ENCODE measurements at regions of chr22 and their contacts with region 1.

Region 1: DNA sequence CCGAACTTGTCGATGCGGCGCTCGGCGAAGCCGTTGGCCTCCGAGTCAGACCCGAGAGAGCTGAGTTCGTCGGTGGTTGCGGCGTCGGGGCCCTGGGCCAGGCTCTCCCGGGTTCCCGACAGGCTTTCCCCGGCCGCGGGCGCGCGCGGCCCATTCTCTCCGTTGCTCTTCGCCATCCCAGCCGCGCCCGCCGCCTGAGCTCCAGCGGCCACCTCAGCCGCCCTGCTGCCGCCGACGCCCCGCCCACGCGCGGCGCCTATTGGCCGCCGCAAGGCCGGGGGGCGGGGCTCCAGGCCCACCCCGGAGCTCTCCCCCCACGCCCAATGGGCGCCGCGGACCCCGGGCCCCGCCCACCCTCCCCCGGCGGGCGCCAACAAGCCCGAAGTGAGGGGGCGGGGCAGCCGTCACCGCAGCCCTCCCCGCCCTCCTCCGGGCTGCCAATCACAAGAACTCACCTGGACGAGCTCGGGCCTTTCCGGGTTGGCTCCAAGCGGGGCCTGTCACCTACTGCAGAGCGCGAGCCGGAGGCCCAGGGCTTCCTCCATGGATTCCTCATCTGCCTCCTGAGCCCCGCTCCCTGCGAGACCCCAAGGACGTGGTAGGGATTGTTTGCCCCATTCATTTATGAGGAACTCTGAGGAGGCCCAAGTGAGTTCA is at the start of gene TBC1D10A:
- DNase-seq: peak; percentile 97
- ATAC-seq: peak; percentile 87
- H3K4me3 Mint-ChIP-seq: peak within 1 kb of the TSS; percentile 82
- H3K27ac Mint-ChIP-seq: peak within 1 kb of the TSS; percentile 89
- H3K4me1 Mint-ChIP-seq: peaks cover 45% of the 10 kb centered on the region
- H3K27me3 Mint-ChIP-seq: no peaks in the 10 kb centered on the region
- total RNA-seq, gene TBC1D10A: 20.1 to 21.6 TPM

Region 2: GRCh38 chr22:29798801-29799680 is 527.8 kb before region 1 on chr22:
- CTCF ChIA-PET with region 1: no interaction called
- POLR2A ChIA-PET with region 1: no interaction called
- intact Hi-C with region 1: no loop called
- DNase-seq: no peak
- ATAC-seq: no peak
- H3K4me3 Mint-ChIP-seq: no peak overlapping the region
- H3K27ac Mint-ChIP-seq: no peak overlapping the region
- H3K4me1 Mint-ChIP-seq: no peaks in the 10 kb centered on the region
- H3K27me3 Mint-ChIP-seq: no peaks in the 10 kb centered on the region

Region 3: DNA sequence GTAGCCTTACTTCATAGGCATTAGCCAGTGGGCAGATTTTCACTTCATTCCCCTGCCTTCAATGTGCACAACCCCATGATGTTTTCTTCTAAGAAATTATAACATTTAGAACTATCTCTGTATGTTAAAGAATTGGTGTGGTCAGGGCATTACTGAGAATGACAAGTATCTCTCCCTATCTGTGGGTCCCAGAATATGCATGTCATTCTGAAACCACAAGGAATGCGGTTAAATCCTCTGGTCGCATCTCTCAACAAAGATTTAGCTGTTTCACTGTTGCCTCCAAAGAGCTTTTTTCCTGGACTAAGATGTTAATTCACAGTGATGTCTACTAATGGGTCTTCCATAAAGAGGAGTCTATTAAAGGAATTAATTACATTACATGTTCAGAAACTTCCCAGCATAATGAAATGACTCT is 143.0 kb before region 1 on chr22:
- CTCF ChIA-PET with region 1: no interaction called
- POLR2A ChIA-PET with region 1: no interaction called
- intact Hi-C with region 1: no loop called
- DNase-seq: no peak
- ATAC-seq: peak; percentile 57
- H3K4me3 Mint-ChIP-seq: peak overlapping the region; percentile 8
- H3K27ac Mint-ChIP-seq: peak overlapping the region; percentile 84
- H3K4me1 Mint-ChIP-seq: peaks cover 89% of the 10 kb centered on the region
- H3K27me3 Mint-ChIP-seq: no peaks in the 10 kb centered on the region

Region 4: DNA sequence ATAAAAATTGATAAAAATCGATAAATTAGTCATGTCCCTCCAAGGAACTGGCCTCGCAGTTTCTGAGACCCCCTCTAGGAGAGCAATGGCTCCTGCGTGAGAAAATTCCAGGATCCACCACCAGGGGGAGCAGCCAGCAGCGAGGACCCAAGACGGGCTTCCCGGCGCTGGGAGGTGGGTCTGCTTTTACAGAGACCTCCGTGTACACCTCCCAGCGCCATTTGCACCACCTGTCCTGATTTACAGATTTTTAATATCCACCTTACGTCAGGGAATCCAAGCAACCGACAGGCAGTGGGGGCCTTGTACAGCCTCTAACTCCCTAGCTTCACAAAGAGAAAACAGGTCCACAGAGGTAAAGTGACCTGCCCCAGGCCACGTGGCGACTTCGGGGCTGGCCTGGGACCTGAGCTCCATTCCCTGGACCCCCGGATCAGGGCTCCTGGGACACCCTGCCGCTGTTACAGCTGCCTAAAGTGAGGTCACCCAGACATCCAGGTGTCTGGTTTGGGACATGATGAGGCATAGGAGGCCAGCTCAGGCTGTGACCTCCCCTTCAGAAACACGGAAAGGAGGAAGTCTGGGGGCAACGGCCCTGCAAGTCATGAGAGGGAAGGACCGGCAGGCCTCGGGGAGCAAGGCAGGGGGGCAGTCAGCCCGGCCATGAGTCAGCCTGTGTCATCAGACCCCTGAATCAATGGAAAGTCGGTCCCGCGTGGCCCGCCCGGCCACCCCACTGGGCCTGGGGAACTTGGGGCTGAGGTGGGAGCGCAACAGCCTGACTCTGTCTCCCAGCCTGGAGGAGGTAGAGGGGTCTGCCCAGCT is 63.7 kb before region 1 on chr22:
- CTCF ChIA-PET with region 1: interaction called, 3 read pairs
- POLR2A ChIA-PET with region 1: no interaction called
- intact Hi-C with region 1: loop called in 1 of 2 experiments (anchors 1 kb)
- DNase-seq: peak; percentile 88
- ATAC-seq: no peak
- H3K4me3 Mint-ChIP-seq: peak overlapping the region; percentile 62
- H3K27ac Mint-ChIP-seq: peak overlapping the region; percentile 51
- H3K4me1 Mint-ChIP-seq: peaks cover 33% of the 10 kb centered on the region
- H3K27me3 Mint-ChIP-seq: no peaks in the 10 kb centered on the region

Region 5: DNA sequence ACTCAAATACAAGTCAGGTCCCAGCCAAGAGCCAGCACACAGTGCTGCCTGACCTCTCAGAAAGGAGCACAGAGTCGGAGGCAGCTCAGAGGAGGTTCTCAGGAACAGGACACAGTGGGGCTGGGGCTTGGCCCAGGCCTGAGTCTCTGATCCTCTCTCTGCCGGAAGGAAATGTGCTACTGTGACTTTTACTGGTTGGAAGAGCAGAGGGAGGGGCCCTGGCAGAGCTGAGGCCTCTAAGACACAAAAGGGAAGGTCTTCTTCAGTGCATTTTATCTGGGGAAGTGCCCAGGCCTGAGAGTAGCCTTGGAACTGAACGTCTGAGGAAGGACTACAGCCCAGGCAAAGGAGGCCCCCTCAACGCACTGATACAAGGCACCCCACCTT is 21.3 kb before region 1 on chr22:
- CTCF ChIA-PET with region 1: interaction called, 4 read pairs
- POLR2A ChIA-PET with region 1: interaction called, 3 read pairs
- intact Hi-C with region 1: loop called in 1 of 2 experiments (anchors 2 kb)
- DNase-seq: peak; percentile 68
- ATAC-seq: peak; percentile 79
- H3K4me3 Mint-ChIP-seq: peak overlapping the region; percentile 59
- H3K27ac Mint-ChIP-seq: peak overlapping the region; percentile 85
- H3K4me1 Mint-ChIP-seq: peaks cover 97% of the 10 kb centered on the region
- H3K27me3 Mint-ChIP-seq: no peaks in the 10 kb centered on the region

Region 6: GRCh38 chr22:30310881-30311771 is 15.7 kb before region 1 on chr22:
- CTCF ChIA-PET with region 1: interaction called, 16 read pairs
- POLR2A ChIA-PET with region 1: interaction called, 7 read pairs
- intact Hi-C with region 1: loop called in 1 of 2 experiments (anchors 1 kb)
- DNase-seq: no peak
- ATAC-seq: no peak
- H3K4me3 Mint-ChIP-seq: no peak overlapping the region
- H3K27ac Mint-ChIP-seq: peak overlapping the region; percentile 82
- H3K4me1 Mint-ChIP-seq: peaks cover 95% of the 10 kb centered on the region
- H3K27me3 Mint-ChIP-seq: no peaks in the 10 kb centered on the region

Region 7: DNA sequence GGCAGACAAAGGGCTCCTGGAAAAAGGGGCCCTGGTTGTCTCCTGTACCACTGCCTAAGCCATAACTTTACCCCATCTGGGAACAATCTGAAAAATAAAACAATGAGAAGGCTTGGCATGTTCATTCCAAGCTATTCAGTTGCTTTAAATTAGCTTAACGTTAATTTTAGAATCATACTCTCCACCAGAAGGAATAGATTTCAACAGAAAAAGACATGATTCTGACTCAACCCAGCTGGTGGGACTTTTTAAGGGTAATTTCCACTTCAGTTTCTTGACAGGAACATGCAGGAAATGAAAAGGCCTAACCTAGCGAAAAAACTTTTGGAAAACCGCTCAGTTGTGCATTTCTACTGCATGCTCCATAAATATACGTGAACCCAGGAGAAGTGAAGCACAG is 22.0 kb after region 1 on chr22:
- CTCF ChIA-PET with region 1: interaction called, 6 read pairs
- POLR2A ChIA-PET with region 1: interaction called, 11 read pairs
- intact Hi-C with region 1: no loop called
- DNase-seq: no peak
- ATAC-seq: no peak
- H3K4me3 Mint-ChIP-seq: peak overlapping the region; percentile 47
- H3K27ac Mint-ChIP-seq: peak overlapping the region; percentile 90
- H3K4me1 Mint-ChIP-seq: peaks cover 86% of the 10 kb centered on the region
- H3K27me3 Mint-ChIP-seq: no peaks in the 10 kb centered on the region

Region 8: GRCh38 chr22:30356449-30357235 is 29.8 kb after region 1 on chr22 and contains the starts of genes CCDC157 and SF3A1:
- CTCF ChIA-PET with region 1: interaction called, 5 read pairs
- POLR2A ChIA-PET with region 1: interaction called, 6 read pairs
- intact Hi-C with region 1: loop called (anchors 1 to 2 kb)
- DNase-seq: peak; percentile 94
- ATAC-seq: peak; percentile 93
- H3K4me3 Mint-ChIP-seq: peak within 1 kb of the TSS; percentile 92
- H3K27ac Mint-ChIP-seq: peak within 1 kb of the TSS; percentile 90
- H3K4me1 Mint-ChIP-seq: peaks cover 48% of the 10 kb centered on the region
- H3K27me3 Mint-ChIP-seq: no peaks in the 10 kb centered on the region
- total RNA-seq, gene CCDC157: 2.4 to 3.7 TPM
- total RNA-seq, gene SF3A1: 254 to 499 TPM

Region 9: DNA sequence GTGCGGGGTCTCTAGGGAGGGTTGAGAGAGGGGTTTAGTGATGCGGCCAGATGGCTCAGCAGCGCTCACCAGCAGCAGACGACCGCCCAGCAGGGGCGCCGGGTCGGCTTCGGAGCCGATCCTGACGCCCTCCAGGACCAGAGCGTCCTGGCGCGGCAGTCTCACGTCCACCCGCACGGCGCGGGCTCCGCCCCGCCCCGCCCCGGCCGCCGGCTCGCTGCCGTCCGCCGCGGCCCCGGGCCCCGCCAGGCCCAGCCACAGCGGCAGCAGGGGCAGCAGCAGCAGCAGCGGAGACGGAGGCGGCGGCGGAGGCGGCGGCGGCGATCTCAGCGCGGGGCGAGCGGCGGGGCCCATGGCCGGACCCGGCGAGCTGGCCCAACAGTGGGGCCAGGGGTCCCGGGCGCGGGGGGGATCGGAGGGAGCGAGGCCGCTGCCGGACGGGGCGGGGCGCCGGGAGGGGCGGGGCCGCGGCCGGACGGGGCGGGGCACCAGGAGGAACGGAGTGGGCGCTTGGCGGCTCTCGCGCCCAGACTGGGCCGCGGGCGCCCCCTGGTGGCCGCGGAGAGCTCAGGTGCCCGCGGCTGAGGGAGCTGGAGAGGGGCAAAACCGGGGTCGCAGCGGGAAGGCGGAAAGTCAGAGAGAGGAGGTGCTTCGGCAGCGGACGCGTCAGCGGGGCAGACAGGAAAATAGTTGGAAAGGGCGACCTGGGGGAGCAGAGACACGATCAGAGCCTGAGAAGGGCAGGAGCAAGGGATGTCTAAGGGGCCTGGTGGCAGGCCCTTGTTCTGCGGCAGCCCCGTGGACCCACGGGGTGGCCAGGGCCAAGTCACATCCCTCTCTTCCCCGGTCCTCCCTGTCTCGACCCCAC is 60.4 kb after region 1 on chr22 and contains the start of gene RNF215:
- CTCF ChIA-PET with region 1: interaction called, 7 read pairs
- POLR2A ChIA-PET with region 1: no interaction called
- intact Hi-C with region 1: loop called (anchors 1 to 5 kb)
- DNase-seq: peak; percentile 87
- ATAC-seq: peak; percentile 77
- H3K4me3 Mint-ChIP-seq: peak within 1 kb of the TSS; percentile 73
- H3K27ac Mint-ChIP-seq: peak within 1 kb of the TSS; percentile 9
- H3K4me1 Mint-ChIP-seq: peaks cover 15% of the 10 kb centered on the region
- H3K27me3 Mint-ChIP-seq: no peaks in the 10 kb centered on the region
- total RNA-seq, gene RNF215: 4.3 to 7.4 TPM